ENCODE measurements at regions of chr2 and their contacts with region 1.

Region 1: GRCh38 chr2:71691747-71692501 is 238.6 kb downstream of the DYSF start:
- DNase-seq: peak; percentile 72 to 89
- ATAC-seq: peak; percentile 85 to 91 (median 88)
- H3K4me3 ChIP-seq: no peak overlapping the region
- H3K27ac ChIP-seq: peak overlapping the region; percentile 80
- H3K4me1 ChIP-seq: peaks cover 41% of the 10 kb centered on the region
- H3K27me3 ChIP-seq: no peaks in the 10 kb centered on the region
- CTCF ChIP-seq: peak; percentile 29

Region 2: DNA sequence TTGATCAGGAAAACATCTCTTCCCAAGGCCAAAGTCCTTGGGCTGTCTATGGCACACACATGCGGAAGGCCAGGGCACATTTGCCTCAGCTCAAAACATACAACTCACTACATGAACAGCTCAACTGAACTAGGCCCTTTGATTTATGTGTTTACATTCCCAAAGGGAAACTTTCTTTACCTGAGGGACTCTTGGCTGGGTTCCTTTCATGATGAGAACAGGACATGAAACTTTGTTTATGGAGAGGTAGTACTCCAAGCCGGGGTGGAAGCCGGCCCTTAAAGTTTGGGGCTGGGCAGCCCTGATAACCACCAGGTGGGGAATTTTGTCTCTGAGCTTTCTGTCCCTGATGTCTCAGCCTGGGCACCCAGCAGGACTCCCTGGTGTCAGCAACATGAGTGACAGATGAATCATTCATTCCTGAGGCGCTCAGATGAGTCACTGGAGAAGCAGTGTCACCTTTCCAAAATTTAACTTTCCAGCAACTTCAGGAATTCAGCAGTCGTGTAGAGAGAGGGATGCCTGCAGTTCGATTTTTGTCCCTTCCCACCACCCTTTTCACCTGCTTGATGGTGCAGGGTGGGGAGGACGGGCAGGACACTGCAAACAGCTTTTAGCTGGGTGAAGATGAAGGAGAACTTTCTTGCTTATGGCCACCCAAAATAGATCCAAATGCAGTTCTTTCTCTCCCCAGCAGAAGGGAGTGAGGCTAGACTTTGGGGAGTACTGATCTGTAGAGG is 93.0 kb after region 1 on chr2:
- intact Hi-C with region 1: loop called in 1 of 2 experiments (anchors 5 kb)
- DNase-seq: no peak
- ATAC-seq: peak; percentile 89 to 95 (median 91)
- H3K4me3 ChIP-seq: no peak overlapping the region
- H3K27ac ChIP-seq: peak overlapping the region; percentile 70
- H3K4me1 ChIP-seq: peaks cover 16% of the 10 kb centered on the region
- H3K27me3 ChIP-seq: no peaks in the 10 kb centered on the region
- CTCF ChIP-seq: peak; percentile 12